ENCODE measurements at regions of chr5 and their contacts with region 1.

Region 1: GRCh38 chr5:134101686-134102439 is 12.6 kb upstream of the TCF7 start:
- DNase-seq: peak; percentile 83
- ATAC-seq: peak; percentile 53
- H3K4me3 Mint-ChIP-seq: no peak overlapping the region
- H3K27ac Mint-ChIP-seq: no peak overlapping the region
- H3K4me1 Mint-ChIP-seq: peaks cover 87% of the 10 kb centered on the region
- H3K27me3 Mint-ChIP-seq: no peaks in the 10 kb centered on the region

Region 2: GRCh38 chr5:134070725-134071613 is 30.9 kb before region 1 on chr5:
- CTCF ChIA-PET with region 1: interaction called, 25 read pairs
- POLR2A ChIA-PET with region 1: interaction called, 10 read pairs
- DNase-seq: no peak
- ATAC-seq: peak; percentile 45
- H3K4me3 Mint-ChIP-seq: peak overlapping the region; percentile 37
- H3K27ac Mint-ChIP-seq: peak overlapping the region; percentile 68
- H3K4me1 Mint-ChIP-seq: peaks cover 53% of the 10 kb centered on the region
- H3K27me3 Mint-ChIP-seq: peaks cover 3% of the 10 kb centered on the region

Region 3: DNA sequence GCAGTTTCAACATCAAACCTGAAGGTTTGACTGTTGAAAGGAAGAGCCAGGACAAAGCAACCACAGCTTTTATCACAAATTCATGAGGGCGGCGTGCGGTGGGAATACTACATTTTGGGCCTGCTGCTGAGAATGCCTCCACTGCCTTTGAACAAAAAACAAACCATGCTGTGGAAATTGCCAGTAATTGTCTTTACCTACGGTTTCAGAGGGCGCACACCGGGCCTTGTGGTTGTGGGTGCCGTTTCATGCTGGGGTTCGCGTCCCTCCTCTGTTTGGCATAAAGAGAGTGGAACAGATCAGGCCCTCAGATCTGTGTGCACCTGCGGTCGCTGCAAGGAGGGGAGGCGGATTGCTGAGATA is 14.9 kb before region 1 on chr5:
- CTCF ChIA-PET with region 1: interaction called, 111 read pairs
- POLR2A ChIA-PET with region 1: interaction called, 23 read pairs
- DNase-seq: peak; percentile 87
- ATAC-seq: peak; percentile 85
- H3K4me3 Mint-ChIP-seq: peak overlapping the region; percentile 49
- H3K27ac Mint-ChIP-seq: peak overlapping the region; percentile 80
- H3K4me1 Mint-ChIP-seq: peaks cover 77% of the 10 kb centered on the region
- H3K27me3 Mint-ChIP-seq: peaks cover 2% of the 10 kb centered on the region

Region 4: DNA sequence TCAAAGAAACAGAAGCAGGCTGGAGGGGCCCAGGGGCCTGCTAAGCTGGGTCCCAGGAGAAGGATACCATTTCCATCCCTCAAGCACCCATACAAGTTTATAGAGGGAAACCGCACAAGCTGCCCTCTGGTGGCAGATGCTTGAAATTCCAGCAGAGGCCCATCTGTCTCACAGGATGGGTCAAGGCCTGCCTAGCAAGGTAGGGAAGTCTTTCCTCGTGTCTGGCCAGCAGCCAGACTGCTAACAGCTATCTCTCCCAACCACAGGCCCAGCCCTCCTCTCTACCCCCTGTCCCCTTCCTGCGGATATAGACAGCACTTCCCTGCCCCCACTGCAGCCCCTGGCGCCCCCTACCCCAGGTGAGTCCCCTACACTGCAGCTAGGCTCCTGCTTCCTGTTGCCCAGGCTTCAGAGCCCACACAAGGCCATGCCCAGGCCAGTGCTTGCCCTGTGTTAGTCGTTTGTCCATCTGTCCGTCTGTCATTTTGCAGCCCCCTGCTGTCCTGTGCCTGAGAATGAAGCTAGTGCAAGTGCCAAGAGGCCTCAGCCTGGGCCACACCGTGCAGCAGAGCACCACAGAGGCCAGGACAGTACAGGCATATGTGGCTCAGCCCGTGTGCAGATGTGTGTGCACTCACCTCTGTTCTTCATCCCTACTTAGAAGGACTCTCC is 38.8 kb after region 1 on chr5:
- CTCF ChIA-PET with region 1: no interaction called
- POLR2A ChIA-PET with region 1: interaction called, 16 read pairs
- DNase-seq: peak; percentile 79
- ATAC-seq: peak; percentile 55
- H3K4me3 Mint-ChIP-seq: no peak overlapping the region
- H3K27ac Mint-ChIP-seq: peak overlapping the region; percentile 71
- H3K4me1 Mint-ChIP-seq: peaks cover 64% of the 10 kb centered on the region
- H3K27me3 Mint-ChIP-seq: no peaks in the 10 kb centered on the region